ENCODE measurements at regions of chr1 and their contacts with region 1.

Region 1: GRCh38 chr1:15603050-15603965 is 13.9 kb upstream of the DDI2 start:
- DNase-seq: peak; percentile 96
- ATAC-seq: peak; percentile 98
- H3K4me3 Mint-ChIP-seq: peak overlapping the region; percentile 58
- H3K27ac Mint-ChIP-seq: peak overlapping the region; percentile 33
- H3K4me1 Mint-ChIP-seq: peaks cover 11% of the 10 kb centered on the region
- H3K27me3 Mint-ChIP-seq: peaks cover 10% of the 10 kb centered on the region

Region 2: DNA sequence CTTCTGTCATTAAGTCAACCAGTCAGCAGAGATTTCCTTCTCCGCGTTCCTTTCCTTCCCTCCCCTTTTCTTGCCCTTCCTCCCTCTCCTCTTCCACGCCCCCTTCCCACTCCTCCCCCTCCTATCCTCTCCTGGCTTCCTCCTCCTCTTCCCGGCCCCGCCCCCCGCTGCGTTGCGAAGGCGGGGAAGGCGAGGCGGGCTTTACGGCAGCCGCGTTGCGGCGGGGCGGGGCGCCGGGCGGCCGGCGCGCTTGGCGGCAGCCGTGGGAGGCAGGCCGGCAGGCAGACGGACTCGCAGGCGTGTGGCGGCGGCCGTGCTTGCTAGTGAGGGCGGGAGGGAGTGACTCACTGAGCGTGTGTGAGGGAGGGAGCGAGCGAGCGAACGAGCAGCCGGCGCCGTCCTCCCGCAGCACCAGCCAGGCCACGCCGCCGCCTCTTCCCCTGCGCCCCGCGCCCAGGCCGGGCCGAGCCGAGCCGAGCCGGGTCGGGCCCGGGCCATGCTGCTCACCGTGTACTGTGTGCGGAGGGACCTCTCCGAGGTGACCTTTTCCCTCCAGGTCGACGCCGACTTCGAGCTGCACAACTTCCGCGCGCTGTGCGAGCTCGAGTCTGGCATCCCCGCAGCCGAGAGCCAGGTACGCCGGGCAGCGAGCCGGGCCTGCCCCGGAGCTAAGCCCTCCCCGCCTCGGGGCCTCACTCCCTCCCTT is 14.0 kb after region 1 on chr1 and contains the start of gene DDI2:
- CTCF ChIA-PET with region 1: interaction called, 20 read pairs
- DNase-seq: peak; percentile 97
- ATAC-seq: peak; percentile 95
- H3K4me3 Mint-ChIP-seq: peak within 1 kb of the TSS; percentile 80
- H3K27ac Mint-ChIP-seq: peak within 1 kb of the TSS; percentile 94
- H3K4me1 Mint-ChIP-seq: peaks cover 38% of the 10 kb centered on the region
- H3K27me3 Mint-ChIP-seq: no peaks in the 10 kb centered on the region
- total RNA-seq, gene DDI2: 24.0 to 31.4 TPM

Region 3: GRCh38 chr1:15650433-15650832 is 47.1 kb after region 1 on chr1:
- CTCF ChIA-PET with region 1: no interaction called
- DNase-seq: no peak
- ATAC-seq: no peak
- H3K4me3 Mint-ChIP-seq: no peak overlapping the region
- H3K27ac Mint-ChIP-seq: no peak overlapping the region
- H3K4me1 Mint-ChIP-seq: no peaks in the 10 kb centered on the region
- H3K27me3 Mint-ChIP-seq: no peaks in the 10 kb centered on the region

Measured in activated CD8-positive, alpha-beta memory T cell treated with anti-CD3 and anti-CD28 coated beads, Interleukin-2, amount 10 ng/mL, durations not matched to agents 7 days and 5 days (primary cell).